ENCODE measurements at regions of chr17 and their contacts with region 1.

Region 1: GRCh38 chr17:74873038-74873873 is 462 bp upstream of the FDXR start:
- DNase-seq: peak; percentile 99

Region 2: GRCh38 chr17:74712756-74713155 is 160.5 kb before region 1 on chr17 and contains the start of gene CD300LF:
- CTCF ChIA-PET with region 1: no interaction called
- POLR2A ChIA-PET with region 1: no interaction called
- DNase-seq: no peak

Region 3: DNA sequence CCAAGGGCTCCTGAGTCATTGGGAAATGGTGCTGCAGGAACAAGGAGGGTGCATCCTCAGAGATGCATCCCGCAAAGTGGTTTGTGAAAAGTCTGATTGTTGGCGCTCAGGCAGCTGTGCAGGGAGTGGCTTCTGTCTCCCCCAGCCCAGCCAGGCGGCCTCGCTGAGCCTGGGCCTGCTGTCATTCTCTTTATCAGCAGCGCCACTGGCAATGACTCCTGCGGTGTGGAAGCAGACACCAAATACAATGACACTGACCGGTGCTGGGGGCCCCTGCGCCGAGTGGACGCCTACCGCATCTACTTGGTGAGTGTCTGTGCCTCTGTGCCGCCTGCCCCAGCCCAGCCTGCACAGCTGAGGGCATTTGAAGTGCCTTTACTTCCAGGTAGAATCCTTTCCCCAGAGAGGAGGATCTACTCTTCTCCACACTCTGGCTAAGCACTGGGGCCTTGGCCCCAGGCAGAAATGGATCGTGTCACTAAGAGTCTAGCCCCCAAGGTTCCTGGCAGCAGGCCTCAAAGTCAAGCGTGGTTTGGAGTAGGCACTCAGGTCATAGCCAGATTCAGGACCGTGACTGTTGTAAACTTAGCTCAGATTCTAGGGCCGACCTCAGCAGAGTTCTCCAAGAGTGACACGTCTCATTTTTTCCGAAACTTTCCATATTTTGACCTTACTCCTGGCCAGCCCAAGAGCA is 77.8 kb before region 1 on chr17:
- CTCF ChIA-PET with region 1: interaction called, 3 read pairs
- POLR2A ChIA-PET with region 1: interaction called, 14 read pairs
- DNase-seq: no peak

Region 4: GRCh38 chr17:74859459-74860228 is 13.6 kb before region 1 on chr17 and contains the start of gene GRIN2C:
- CTCF ChIA-PET with region 1: interaction called, 21 read pairs
- POLR2A ChIA-PET with region 1: interaction called, 19 read pairs
- DNase-seq: peak; percentile 70

Region 5: DNA sequence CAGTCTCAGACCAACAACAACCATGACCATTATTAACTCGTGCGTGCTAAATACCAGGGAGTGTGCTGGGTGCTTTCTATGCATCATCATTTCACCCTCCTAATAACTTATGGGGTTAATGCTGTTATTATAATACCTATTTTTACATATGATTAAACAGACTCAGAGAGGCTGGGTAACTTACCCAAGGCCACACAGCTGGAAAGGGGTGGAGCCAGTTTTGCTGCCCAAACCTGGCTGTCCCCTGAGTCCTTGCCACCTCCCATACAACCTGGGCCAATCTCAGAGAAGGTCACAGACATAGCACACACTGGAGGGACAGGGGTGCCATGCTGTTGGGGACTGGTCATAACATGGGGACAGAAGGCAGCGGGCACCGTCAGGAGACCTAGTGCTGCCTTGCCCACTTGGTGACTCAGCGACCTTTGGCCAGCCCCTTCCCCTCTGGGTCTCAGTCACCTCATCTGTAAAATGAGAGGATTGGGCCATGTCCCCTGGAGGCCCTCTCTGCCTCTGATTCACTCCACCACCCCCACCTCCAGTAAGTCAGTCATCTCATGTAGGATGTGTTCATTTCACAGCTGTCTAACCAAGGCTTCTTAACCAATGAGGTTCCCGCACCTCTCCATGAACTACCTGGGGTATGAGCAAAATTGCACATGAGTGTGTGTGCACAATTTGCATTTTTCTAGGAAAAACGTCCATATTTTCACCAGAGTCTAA is 31.6 kb after region 1 on chr17:
- CTCF ChIA-PET with region 1: no interaction called
- POLR2A ChIA-PET with region 1: interaction called, 36 read pairs
- DNase-seq: no peak

Region 6: DNA sequence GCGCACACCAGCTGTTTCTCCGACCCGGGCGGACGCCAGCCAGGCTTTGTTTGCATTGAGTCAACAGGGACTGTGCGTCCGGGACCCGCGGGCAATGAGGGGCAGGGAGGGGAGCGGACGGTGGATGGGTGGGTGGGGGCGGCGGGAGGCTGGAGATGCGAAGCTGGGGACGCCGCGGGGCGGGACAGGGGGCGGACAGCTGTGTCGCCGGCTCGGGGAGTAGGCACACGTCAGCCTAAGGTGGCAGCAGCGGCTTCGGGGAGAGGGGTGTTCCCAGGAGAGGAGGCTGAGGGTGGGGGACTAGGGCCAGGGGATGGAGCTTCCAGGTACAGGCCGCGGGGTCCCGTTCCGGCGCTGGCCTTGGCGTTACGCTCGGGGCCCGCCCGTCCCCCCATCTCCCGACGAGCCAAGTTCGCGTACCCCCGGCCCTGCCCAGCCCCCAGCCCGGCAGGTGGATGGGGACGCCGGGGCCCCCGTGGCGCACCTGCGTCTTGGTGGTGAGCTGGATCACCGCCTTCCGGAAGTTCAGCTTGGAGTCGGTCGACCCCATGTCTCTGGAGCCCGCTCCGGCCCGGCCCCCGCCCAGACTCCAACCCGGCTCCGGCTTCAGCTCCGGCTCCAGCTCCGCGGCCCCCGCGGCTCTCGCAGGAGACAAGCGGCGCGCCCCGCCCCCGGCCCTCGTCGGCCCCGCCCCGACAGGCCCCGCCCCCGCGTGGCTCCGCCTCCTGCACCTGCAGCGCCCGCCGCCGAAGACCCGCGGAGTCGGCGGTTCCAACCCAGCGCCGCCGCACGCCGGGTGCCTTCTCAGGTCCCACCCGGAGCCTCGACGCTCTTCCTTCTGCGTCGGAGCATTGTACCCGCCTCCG is 99.1 kb after region 1 on chr17 and contains the start of gene HID1:
- CTCF ChIA-PET with region 1: no interaction called
- POLR2A ChIA-PET with region 1: interaction called, 15 read pairs
- DNase-seq: peak; percentile 93

Region 7: DNA sequence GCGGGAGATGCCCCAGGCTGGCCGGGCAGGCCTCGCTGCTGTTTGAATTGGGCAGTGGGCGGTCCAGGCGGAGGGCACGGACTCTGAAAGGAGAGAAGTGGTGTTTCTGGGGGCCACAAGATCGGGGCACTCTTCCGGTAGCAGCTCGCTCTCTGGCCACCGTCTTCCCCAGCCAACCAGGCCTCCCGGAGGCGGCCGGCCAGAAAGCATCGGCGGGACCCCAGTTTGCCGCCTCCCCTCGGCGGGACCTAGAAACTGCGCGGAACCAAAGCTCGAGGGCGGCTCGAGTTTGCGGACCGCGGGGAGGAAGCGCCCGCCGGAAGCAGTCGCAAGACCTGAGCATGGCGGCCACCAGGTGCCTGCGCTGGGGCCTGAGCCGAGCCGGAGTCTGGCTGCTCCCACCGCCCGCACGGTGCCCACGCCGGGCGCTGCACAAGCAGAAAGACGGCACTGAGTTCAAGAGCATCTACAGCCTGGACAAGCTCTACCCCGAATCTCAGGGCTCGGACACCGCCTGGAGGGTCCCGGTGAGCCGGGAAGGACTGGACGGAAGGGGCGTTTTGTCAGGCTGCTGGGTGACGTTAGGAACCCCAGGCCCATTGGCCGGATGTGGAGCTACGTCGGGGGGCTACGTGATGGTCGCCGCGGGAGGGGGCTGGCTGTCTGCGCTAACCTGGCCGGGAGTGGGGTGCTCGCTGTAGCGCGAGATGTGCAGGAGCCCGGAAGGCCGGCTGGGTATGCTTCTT is 139.3 kb after region 1 on chr17 and contains the start of gene MRPL58:
- CTCF ChIA-PET with region 1: no interaction called
- POLR2A ChIA-PET with region 1: interaction called, 19 read pairs
- DNase-seq: peak; percentile 90